PC-3 (cell line): ENCODE measurements at regions of chrX and their contacts with region 1.

Region 1: DNA sequence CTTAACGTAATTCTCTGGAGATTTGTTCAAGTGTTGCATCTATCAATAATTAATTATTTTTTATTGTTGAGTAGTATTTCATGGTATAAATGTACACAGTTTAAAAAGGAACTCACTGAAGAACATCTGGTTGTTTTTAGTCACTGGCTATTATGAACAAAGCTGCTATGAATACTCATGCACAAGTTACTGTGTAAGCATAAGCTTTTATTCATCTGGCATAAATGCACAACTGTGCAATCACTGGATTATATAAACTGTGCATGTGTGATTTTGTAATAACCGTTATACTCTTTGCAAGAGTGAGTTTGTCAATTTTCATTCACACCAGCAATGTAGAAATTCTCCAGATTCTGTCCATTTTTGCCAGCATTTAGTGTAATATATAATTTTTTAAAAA is 43.8 kb upstream of the UBQLN2 start:
- DNase-seq: no peak
- ATAC-seq: no peak
- H3K4me3 ChIP-seq: no peak overlapping the region
- H3K27ac ChIP-seq: no peak overlapping the region
- H3K4me1 ChIP-seq: no peaks in the 10 kb centered on the region
- H3K27me3 ChIP-seq: no peaks in the 10 kb centered on the region
- CTCF ChIP-seq: no peak

Region 2: DNA sequence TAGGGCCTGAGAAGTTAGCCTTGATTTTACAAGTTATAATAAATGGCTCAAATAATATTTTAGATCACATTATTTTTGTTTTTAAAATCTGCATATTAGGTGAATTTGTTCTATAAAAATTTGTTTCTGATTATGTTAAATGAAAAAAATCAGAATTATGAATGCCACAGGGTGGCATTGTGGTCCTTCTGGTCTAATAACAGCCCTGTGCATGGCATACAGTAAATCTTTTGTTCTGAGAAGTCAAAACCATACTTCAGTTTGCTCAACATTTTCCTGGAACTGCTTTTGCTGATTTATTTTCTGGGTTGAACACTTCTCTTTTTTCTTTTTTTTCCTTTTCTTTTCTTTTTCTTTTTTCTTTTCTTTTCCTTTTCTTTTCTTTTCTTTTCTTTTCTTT is 57.3 kb before region 1 on chrX:
- CTCF ChIA-PET with region 1: no interaction called
- POLR2A ChIA-PET with region 1: no interaction called
- intact Hi-C with region 1: no loop called
- DNase-seq: no peak
- ATAC-seq: no peak
- H3K4me3 ChIP-seq: no peak overlapping the region
- H3K27ac ChIP-seq: no peak overlapping the region
- H3K4me1 ChIP-seq: no peaks in the 10 kb centered on the region
- H3K27me3 ChIP-seq: no peaks in the 10 kb centered on the region
- CTCF ChIP-seq: no peak

Region 3: GRCh38 chrX:56503941-56504662 is 15.5 kb before region 1 on chrX:
- CTCF ChIA-PET with region 1: no interaction called
- POLR2A ChIA-PET with region 1: interaction called, 15 read pairs
- intact Hi-C with region 1: no loop called
- DNase-seq: peak; percentile 85
- ATAC-seq: peak; percentile 79
- H3K4me3 ChIP-seq: peak overlapping the region; percentile 23; the same call in 1 of the 2 replicates
- H3K27ac ChIP-seq: peak overlapping the region; percentile 98
- H3K4me1 ChIP-seq: peaks cover 50% of the 10 kb centered on the region
- H3K27me3 ChIP-seq: no peaks in the 10 kb centered on the region
- CTCF ChIP-seq: peak; percentile 44; the same call in 1 of the 2 replicates